Activated T-helper 2 cell treated with anti-CD3 and anti-CD28 coated beads, Interferon-gamma antibody, Interleukin-2, Interleukin-4, amounts not matched to agents 10 μg/mL and 5 μg/mL and 100 μg/mL, durations not matched to agents 14 hours and 24 hours and 36 hours (primary cell): ENCODE measurements at regions of chr14 and their contacts with region 1.

Region 1: GRCh38 chr14:77067632-77068514 is 30.2 kb upstream of the CIPC start:
- DNase-seq: peak; percentile 45
- H3K4me3 Mint-ChIP-seq: no peak overlapping the region
- H3K27ac Mint-ChIP-seq: no peak overlapping the region
- H3K4me1 Mint-ChIP-seq: no peaks in the 10 kb centered on the region
- H3K27me3 Mint-ChIP-seq: no peaks in the 10 kb centered on the region

Region 2: GRCh38 chr14:76710056-76711010 is 357.5 kb before region 1 on chr14:
- intact Hi-C with region 1: loop called (anchors 5 kb)
- DNase-seq: no peak
- H3K4me3 Mint-ChIP-seq: no peak overlapping the region
- H3K27ac Mint-ChIP-seq: no peak overlapping the region
- H3K4me1 Mint-ChIP-seq: no peaks in the 10 kb centered on the region
- H3K27me3 Mint-ChIP-seq: peaks cover under 1% of the 10 kb centered on the region

Region 3: GRCh38 chr14:76876076-76876475 is 191.8 kb before region 1 on chr14:
- intact Hi-C with region 1: loop called (anchors 1 kb)
- DNase-seq: peak; percentile 20
- H3K4me3 Mint-ChIP-seq: no peak overlapping the region
- H3K27ac Mint-ChIP-seq: no peak overlapping the region
- H3K4me1 Mint-ChIP-seq: no peaks in the 10 kb centered on the region
- H3K27me3 Mint-ChIP-seq: no peaks in the 10 kb centered on the region

Region 4: GRCh38 chr14:76917158-76917596 is 150.7 kb before region 1 on chr14:
- intact Hi-C with region 1: loop called (anchors 1 kb)
- DNase-seq: no peak
- H3K4me3 Mint-ChIP-seq: no peak overlapping the region
- H3K27ac Mint-ChIP-seq: no peak overlapping the region
- H3K4me1 Mint-ChIP-seq: peaks cover 37% of the 10 kb centered on the region
- H3K27me3 Mint-ChIP-seq: no peaks in the 10 kb centered on the region

Region 5: GRCh38 chr14:77033622-77034521 is 34.0 kb before region 1 on chr14:
- intact Hi-C with region 1: no loop called
- DNase-seq: peak; percentile 77
- H3K4me3 Mint-ChIP-seq: peak overlapping the region; percentile 90
- H3K27ac Mint-ChIP-seq: peak overlapping the region; percentile 99
- H3K4me1 Mint-ChIP-seq: peaks cover 72% of the 10 kb centered on the region
- H3K27me3 Mint-ChIP-seq: no peaks in the 10 kb centered on the region